ENCODE measurements at regions of chr18 and their contacts with region 1.

Region 1: DNA sequence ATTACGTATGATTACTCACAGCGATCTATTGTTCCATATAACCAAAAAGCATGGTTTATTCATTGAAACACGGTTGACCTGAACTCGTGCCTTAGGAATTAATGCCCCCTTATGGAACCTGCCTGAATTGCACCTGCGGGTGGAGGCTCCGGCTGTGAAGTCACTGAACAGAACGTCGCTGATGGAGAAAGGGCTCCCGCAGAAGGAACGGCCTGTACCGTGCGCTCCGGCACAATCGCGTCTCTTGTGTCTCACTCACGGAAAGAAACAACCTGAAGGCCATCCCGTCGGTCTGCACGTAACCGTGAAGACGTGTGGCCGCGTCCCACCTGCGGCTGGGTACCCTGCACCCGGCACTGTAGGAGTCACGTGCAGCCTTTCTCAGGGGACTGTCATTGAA is 133.1 kb downstream of the NFATC1 start:
- DNase-seq: no peak
- H3K4me3 ChIP-seq: no peak overlapping the region
- H3K27ac ChIP-seq: no peak overlapping the region
- H3K4me1 ChIP-seq: peaks cover 0 to 8% of the 10 kb centered on the region in 2 donors
- H3K27me3 ChIP-seq: no peaks in the 10 kb centered on the region
- CTCF ChIP-seq: peak; percentile 73 to 80 (median 73)
- POLR2A ChIP-seq: no peak

Region 2: DNA sequence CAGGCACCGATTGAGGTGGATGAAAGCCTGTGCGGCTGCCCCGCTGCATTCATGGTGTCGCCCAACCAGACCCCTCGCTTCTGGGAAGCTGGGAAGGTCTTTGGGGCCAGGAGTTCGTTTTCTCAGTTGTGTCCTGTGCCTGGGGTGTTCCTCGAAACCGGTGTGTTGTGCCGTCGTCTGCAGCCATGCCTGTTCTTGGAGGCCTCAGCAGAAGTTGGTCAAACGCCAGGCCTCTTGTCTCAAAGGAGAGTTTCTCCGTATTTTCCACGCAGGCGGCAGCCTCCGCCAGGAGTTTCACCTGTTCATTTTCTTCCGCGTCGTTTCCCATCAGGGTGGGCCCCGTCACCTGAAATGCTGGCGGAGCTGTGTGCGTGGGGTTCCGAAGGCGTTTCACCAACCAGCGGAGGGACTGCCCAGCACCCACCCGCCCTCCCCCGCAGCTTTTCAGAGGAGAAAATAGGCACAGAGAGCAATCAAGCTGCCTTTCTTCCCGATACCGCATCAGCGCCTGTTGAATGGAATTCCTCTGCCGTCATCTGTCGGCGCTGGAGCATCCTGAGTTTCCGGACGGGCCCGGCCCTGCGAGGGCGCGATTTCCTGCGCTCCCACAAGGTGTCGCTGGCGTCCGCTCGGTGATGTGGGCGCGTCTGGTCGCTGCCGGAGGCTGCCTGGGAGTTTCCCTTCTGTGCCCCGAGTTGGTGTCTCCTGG is 150.2 kb before region 1 on chr18:
- intact Hi-C with region 1: loop called (anchors 5 kb)
- DNase-seq: peak; percentile 70 to 91
- H3K4me3 ChIP-seq: no peak overlapping the region
- H3K27ac ChIP-seq: no peak overlapping the region
- H3K4me1 ChIP-seq: peaks cover 0 to 4% of the 10 kb centered on the region in 2 donors
- H3K27me3 ChIP-seq: no peaks in the 10 kb centered on the region
- CTCF ChIP-seq: peak; percentile 84 to 96 (median 94)
- POLR2A ChIP-seq: no peak

Region 3: DNA sequence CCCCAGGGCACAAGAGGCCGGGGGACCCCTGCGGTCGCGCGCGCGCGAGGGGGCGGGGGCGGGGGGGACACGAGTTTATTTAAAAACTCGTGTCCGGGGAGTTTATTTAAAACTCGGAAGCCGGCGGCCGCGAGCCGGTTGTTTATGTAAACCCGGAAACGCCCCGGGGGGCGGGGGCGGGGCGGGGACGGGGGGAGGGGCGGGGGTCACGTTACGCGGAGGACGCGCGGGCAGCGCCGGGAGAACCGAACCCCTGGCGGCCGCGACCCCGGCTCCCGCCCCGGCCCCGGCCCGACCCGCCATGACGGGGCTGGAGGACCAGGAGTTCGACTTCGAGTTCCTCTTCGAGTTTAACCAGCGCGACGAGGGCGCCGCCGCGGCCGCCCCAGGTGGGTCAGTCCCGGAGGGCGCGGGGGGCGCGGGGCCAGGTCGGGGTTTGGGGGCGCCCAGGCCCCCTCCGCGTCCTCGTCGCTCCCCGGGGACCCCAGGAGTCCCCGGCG is 128.7 kb before region 1 on chr18:
- intact Hi-C with region 1: loop called (anchors 10 kb)
- DNase-seq: peak in 1 of 2 donors; percentile 78
- H3K4me3 ChIP-seq: peak overlapping the region; percentile 82 to 86 (median 84)
- H3K27ac ChIP-seq: peak overlapping the region; percentile 81 to 84
- H3K4me1 ChIP-seq: peaks cover 0 to 4% of the 10 kb centered on the region in 2 donors
- H3K27me3 ChIP-seq: no peaks in the 10 kb centered on the region
- CTCF ChIP-seq: no peak
- POLR2A ChIP-seq: no peak